Activated B cell treated with CpG ODN at 0.5 μM for 24 hours (primary cell): ENCODE measurements at regions of chr3 and their contacts with region 1.

Region 1: GRCh38 chr3:186930641-186931531 is 560 bp downstream of the ST6GAL1 start:
- DNase-seq: peak; percentile 65
- ATAC-seq: peak; percentile 83
- H3K4me3 Mint-ChIP-seq: peak overlapping the region; percentile 98
- H3K27ac Mint-ChIP-seq: peak overlapping the region; percentile 94
- H3K4me1 Mint-ChIP-seq: peaks cover 53% of the 10 kb centered on the region
- H3K27me3 Mint-ChIP-seq: no peaks in the 10 kb centered on the region
- CTCF ChIP-seq: no peak

Region 2: DNA sequence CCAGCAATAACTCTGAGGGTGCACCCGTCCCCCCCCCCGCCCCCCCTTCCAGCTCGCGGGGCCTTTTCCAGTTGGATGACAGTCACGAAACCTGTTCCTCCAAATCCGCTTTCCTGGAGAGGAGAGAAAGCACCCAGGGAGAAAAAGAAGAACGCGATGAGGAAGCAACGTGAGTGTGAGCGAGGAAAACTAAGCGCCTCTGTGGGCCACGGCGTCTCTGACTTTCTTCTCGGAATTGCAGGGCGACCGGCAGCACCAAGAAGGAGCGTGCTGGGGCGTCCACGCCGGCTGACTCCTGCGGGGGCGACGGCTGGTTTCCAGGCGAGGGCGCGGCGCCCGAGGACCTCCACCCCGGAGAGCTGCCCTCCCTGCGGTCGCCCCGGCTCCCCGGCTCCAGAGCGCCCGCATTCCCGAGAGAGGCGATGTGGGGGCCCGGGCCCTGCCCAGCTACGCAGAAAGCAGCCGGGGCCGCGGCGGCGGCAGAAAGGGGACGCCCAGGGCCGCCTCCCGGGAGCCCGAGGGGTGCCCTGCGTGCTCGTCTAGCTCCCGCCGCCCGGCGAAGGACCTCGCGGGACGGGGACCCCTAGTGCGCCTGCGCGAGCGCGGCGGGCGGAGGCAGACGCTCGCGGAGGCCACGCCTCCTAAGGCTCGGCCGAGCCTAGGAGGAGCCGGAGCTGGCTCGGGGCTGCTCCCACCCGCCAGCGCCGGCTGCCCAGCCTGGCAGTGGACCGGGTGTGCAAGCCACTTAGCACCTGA is 103.7 kb before region 1 on chr3:
- CTCF ChIA-PET with region 1: no interaction called
- POLR2A ChIA-PET with region 1: interaction called, 4 read pairs
- intact Hi-C with region 1: loop called (anchors 1 kb)
- DNase-seq: peak; percentile 85
- ATAC-seq: peak; percentile 94
- H3K4me3 Mint-ChIP-seq: peak overlapping the region; percentile 71
- H3K27ac Mint-ChIP-seq: no peak overlapping the region
- H3K4me1 Mint-ChIP-seq: peaks cover 22% of the 10 kb centered on the region
- H3K27me3 Mint-ChIP-seq: peaks cover 47% of the 10 kb centered on the region
- CTCF ChIP-seq: no peak

Region 3: GRCh38 chr3:186985661-186986364 is 54.9 kb after region 1 on chr3:
- CTCF ChIA-PET with region 1: interaction called, 3 read pairs
- POLR2A ChIA-PET with region 1: interaction called, 11 read pairs
- intact Hi-C with region 1: loop called (anchors 5 kb)
- DNase-seq: no peak
- ATAC-seq: peak; percentile 82
- H3K4me3 Mint-ChIP-seq: peak overlapping the region; percentile 39
- H3K27ac Mint-ChIP-seq: peak overlapping the region; percentile 97
- H3K4me1 Mint-ChIP-seq: peaks cover 91% of the 10 kb centered on the region
- H3K27me3 Mint-ChIP-seq: no peaks in the 10 kb centered on the region
- CTCF ChIP-seq: no peak

Region 4: DNA sequence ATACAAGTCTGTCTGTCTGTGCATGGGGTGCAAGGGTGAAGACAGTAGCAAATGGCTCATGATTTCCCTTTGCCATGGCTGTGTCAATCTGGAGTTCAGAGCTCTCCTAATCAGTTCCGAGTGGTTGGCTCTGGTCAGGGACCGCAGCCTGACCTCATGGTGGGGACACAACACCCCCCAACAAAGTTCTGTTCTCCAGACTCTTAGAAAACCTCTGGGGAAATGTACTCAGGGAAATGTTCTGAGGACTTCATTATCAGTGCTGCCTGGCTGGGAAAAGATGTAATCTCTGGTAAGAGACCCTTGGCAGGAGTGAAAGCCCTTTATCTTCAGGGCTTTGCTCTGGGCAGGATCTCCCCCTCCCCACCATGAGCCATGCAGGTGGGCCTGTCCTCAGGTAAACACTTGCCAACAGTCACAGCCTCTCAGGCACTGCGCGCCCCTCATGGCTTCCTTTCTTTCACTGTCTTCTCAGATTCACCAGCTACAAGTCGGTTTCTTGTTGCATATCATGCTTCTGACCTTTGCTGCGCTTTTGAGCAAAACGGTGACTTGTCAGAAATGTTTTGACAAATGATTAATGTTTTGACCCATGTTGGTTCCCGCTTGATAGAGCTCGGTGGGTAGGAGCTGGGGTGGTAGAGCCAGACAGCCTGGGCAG is 94.9 kb after region 1 on chr3:
- CTCF ChIA-PET with region 1: interaction called, 6 read pairs
- POLR2A ChIA-PET with region 1: interaction called, 77 read pairs
- intact Hi-C with region 1: loop called (anchors 1 kb)
- DNase-seq: no peak
- ATAC-seq: peak; percentile 51
- H3K4me3 Mint-ChIP-seq: peak overlapping the region; percentile 84
- H3K27ac Mint-ChIP-seq: peak overlapping the region; percentile 93
- H3K4me1 Mint-ChIP-seq: peaks cover 93% of the 10 kb centered on the region
- H3K27me3 Mint-ChIP-seq: no peaks in the 10 kb centered on the region
- CTCF ChIP-seq: no peak

Region 5: GRCh38 chr3:187066228-187066995 is 135.5 kb after region 1 on chr3:
- CTCF ChIA-PET with region 1: interaction called, 4 read pairs
- POLR2A ChIA-PET with region 1: interaction called, 21 read pairs
- intact Hi-C with region 1: loop called (anchors 2 kb)
- DNase-seq: no peak
- ATAC-seq: peak; percentile 39
- H3K4me3 Mint-ChIP-seq: peak overlapping the region; percentile 68
- H3K27ac Mint-ChIP-seq: peak overlapping the region; percentile 92
- H3K4me1 Mint-ChIP-seq: peaks cover 97% of the 10 kb centered on the region
- H3K27me3 Mint-ChIP-seq: no peaks in the 10 kb centered on the region
- CTCF ChIP-seq: no peak

Region 6: GRCh38 chr3:187120326-187120725 is 189.4 kb after region 1 on chr3:
- CTCF ChIA-PET with region 1: no interaction called
- POLR2A ChIA-PET with region 1: no interaction called
- intact Hi-C with region 1: no loop called
- DNase-seq: no peak
- ATAC-seq: no peak
- H3K4me3 Mint-ChIP-seq: no peak overlapping the region
- H3K27ac Mint-ChIP-seq: no peak overlapping the region
- H3K4me1 Mint-ChIP-seq: peaks cover 14% of the 10 kb centered on the region
- H3K27me3 Mint-ChIP-seq: no peaks in the 10 kb centered on the region
- CTCF ChIP-seq: no peak

Region 7: GRCh38 chr3:187139126-187139894 is 208.4 kb after region 1 on chr3 and contains the start of gene RPL39L:
- CTCF ChIA-PET with region 1: interaction called, 5 read pairs
- POLR2A ChIA-PET with region 1: interaction called, 9 read pairs
- intact Hi-C with region 1: loop called (anchors 1 kb)
- DNase-seq: peak; percentile 95
- ATAC-seq: peak; percentile 95
- H3K4me3 Mint-ChIP-seq: peak within 1 kb of the TSS; percentile 90
- H3K27ac Mint-ChIP-seq: peak within 1 kb of the TSS; percentile 95
- H3K4me1 Mint-ChIP-seq: peaks cover 19% of the 10 kb centered on the region
- H3K27me3 Mint-ChIP-seq: no peaks in the 10 kb centered on the region
- CTCF ChIP-seq: no peak
- total RNA-seq, gene RPL39L: 4.7 and 6.9 TPM in 2 replicates

Region 8: DNA sequence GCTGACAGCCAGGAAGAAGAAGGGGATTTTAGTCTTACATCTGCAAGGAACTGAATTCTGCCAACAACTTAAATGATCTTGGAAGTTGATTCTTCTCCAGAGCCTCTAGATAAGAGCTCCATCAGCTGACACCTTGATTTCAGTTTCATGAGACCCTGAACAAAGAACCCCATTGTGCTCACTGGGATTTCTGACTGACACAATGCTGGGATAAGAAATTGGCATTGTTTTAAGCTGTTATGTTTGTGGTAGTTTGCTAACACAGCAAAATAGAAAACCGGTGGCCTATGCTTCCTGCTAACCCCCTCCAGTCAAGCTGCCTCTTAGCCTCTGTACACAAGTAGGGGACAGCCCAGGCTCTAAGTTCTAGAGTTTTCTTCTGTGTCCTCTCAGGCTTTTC is 324.4 kb after region 1 on chr3:
- CTCF ChIA-PET with region 1: no interaction called
- POLR2A ChIA-PET with region 1: no interaction called
- intact Hi-C with region 1: no loop called
- DNase-seq: no peak
- ATAC-seq: no peak
- H3K4me3 Mint-ChIP-seq: no peak overlapping the region
- H3K27ac Mint-ChIP-seq: no peak overlapping the region
- H3K4me1 Mint-ChIP-seq: no peaks in the 10 kb centered on the region
- H3K27me3 Mint-ChIP-seq: peaks cover 7% of the 10 kb centered on the region
- CTCF ChIP-seq: no peak

Region 9: GRCh38 chr3:187368251-187369088 is 437.6 kb after region 1 on chr3 and contains the start of gene RTP4:
- CTCF ChIA-PET with region 1: no interaction called
- POLR2A ChIA-PET with region 1: no interaction called
- intact Hi-C with region 1: no loop called
- DNase-seq: peak; percentile 23
- ATAC-seq: peak; percentile 70
- H3K4me3 Mint-ChIP-seq: peak within 1 kb of the TSS; percentile 97
- H3K27ac Mint-ChIP-seq: peak within 1 kb of the TSS; percentile 96
- H3K4me1 Mint-ChIP-seq: peaks cover 22% of the 10 kb centered on the region
- H3K27me3 Mint-ChIP-seq: no peaks in the 10 kb centered on the region
- CTCF ChIP-seq: no peak
- total RNA-seq, gene RTP4: 7.4 and 9.0 TPM in 2 replicates